Prostate gland (tissue), 2 donors: ENCODE measurements at regions of chr1 and their contacts with region 1.

Region 1: GRCh38 chr1:230771773-230772352 is 24.7 kb downstream of the CAPN9 start:
- DNase-seq: no peak
- H3K4me3 ChIP-seq: no peak overlapping the region
- H3K27ac ChIP-seq: no peak overlapping the region
- H3K4me1 ChIP-seq: no peaks in the 10 kb centered on the region
- H3K27me3 ChIP-seq: no peaks in the 10 kb centered on the region
- CTCF ChIP-seq: no peak
- POLR2A ChIP-seq: no peak

Region 2: DNA sequence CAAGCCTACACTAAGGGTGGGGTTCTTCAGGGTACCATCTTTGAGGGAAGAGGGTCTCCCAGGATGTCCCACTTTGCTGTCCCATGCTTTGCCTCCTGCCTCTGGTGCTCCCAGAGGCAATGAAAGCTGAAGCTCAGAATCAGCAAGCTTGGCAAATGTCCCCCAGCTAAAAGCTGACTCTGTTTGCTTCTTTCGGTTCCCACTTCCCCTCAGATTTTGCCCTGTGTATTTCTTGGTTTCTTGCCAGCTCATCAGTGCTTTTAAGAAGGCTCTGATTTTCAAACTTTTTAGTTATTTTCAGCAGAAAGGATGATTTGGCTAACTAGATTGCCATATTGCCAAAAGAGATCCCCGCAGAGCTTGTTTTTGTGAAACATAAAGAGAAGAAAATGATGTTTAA is 162.7 kb before region 1 on chr1:
- intact Hi-C with region 1: no loop called
- DNase-seq: no peak
- H3K4me3 ChIP-seq: no peak overlapping the region
- H3K27ac ChIP-seq: no peak overlapping the region
- H3K4me1 ChIP-seq: no peaks in the 10 kb centered on the region
- H3K27me3 ChIP-seq: no peaks in the 10 kb centered on the region
- CTCF ChIP-seq: no peak
- POLR2A ChIP-seq: no peak

Region 3: GRCh38 chr1:230641900-230642262 is 130.0 kb before region 1 on chr1:
- intact Hi-C with region 1: loop called (anchors 2 kb)
- DNase-seq: peak; percentile 4
- H3K4me3 ChIP-seq: peak overlapping the region; percentile 57 to 82
- H3K27ac ChIP-seq: no peak overlapping the region
- H3K4me1 ChIP-seq: peaks cover 9% of the 10 kb centered on the region
- H3K27me3 ChIP-seq: no peaks in the 10 kb centered on the region
- CTCF ChIP-seq: no peak
- POLR2A ChIP-seq: no peak

Region 4: GRCh38 chr1:231534703-231535159 is 762.9 kb after region 1 on chr1:
- intact Hi-C with region 1: no loop called
- DNase-seq: no peak
- H3K4me3 ChIP-seq: no peak overlapping the region
- H3K27ac ChIP-seq: no peak overlapping the region
- H3K4me1 ChIP-seq: no peaks in the 10 kb centered on the region
- H3K27me3 ChIP-seq: no peaks in the 10 kb centered on the region
- CTCF ChIP-seq: no peak
- POLR2A ChIP-seq: no peak